ENCODE measurements at regions of chr6 and their contacts with region 1.

Region 1: GRCh38 chr6:43143235-43144124 is 27.6 kb upstream of the SRF start:
- DNase-seq: peak; percentile 91 to 98 (median 96)
- ATAC-seq: peak; percentile 99
- H3K4me3 ChIP-seq: no peak overlapping the region
- H3K27ac ChIP-seq: peak overlapping the region; percentile 47; the same call in 2 of the 3 replicates
- H3K4me1 ChIP-seq: peaks cover 5 to 21% of the 10 kb centered on the region in 2 experiments; a peak in 4 of 5 replicates
- H3K27me3 ChIP-seq: no peaks in the 10 kb centered on the region; a peak in 1 of 5 replicates
- CTCF ChIP-seq: peak; percentile 98 to 99 (median 99)
- EP300 ChIP-seq: no peak; the same call in 1 of the 2 replicates
- POLR2A ChIP-seq: no peak
- RAD21 ChIP-seq: peak; percentile 99 to 100

Region 2: GRCh38 chr6:42790549-42791181 is 352.8 kb before region 1 on chr6:
- CTCF ChIA-PET with region 1: no interaction called
- POLR2A ChIA-PET with region 1: no interaction called
- in situ Hi-C with region 1: no loop called
- intact Hi-C with region 1: no loop called
- DNase-seq: peak in 1 of 4 experiments; percentile 13
- ATAC-seq: peak; percentile 61
- H3K4me3 ChIP-seq: no peak overlapping the region
- H3K27ac ChIP-seq: no peak overlapping the region
- H3K4me1 ChIP-seq: peaks cover 11 to 31% of the 10 kb centered on the region in 2 experiments
- H3K27me3 ChIP-seq: no peaks in the 10 kb centered on the region
- CTCF ChIP-seq: no peak
- EP300 ChIP-seq: no peak
- POLR2A ChIP-seq: 0 out of 2 replicates have a peak, but pooled peaks have one; percentile 19
- RAD21 ChIP-seq: no peak

Region 3: GRCh38 chr6:42911171-42912021 is 232.1 kb before region 1 on chr6:
- CTCF ChIA-PET with region 1: no interaction called
- POLR2A ChIA-PET with region 1: no interaction called
- in situ Hi-C with region 1: loop called (anchors 5 kb)
- intact Hi-C with region 1: no loop called
- DNase-seq: no peak
- ATAC-seq: no peak
- H3K4me3 ChIP-seq: no peak overlapping the region
- H3K27ac ChIP-seq: no peak overlapping the region
- H3K4me1 ChIP-seq: peaks cover 5 to 13% of the 10 kb centered on the region in 2 experiments; a peak in 4 of 5 replicates
- H3K27me3 ChIP-seq: no peaks in the 10 kb centered on the region
- CTCF ChIP-seq: no peak
- EP300 ChIP-seq: no peak
- POLR2A ChIP-seq: no peak
- RAD21 ChIP-seq: no peak

Region 4: DNA sequence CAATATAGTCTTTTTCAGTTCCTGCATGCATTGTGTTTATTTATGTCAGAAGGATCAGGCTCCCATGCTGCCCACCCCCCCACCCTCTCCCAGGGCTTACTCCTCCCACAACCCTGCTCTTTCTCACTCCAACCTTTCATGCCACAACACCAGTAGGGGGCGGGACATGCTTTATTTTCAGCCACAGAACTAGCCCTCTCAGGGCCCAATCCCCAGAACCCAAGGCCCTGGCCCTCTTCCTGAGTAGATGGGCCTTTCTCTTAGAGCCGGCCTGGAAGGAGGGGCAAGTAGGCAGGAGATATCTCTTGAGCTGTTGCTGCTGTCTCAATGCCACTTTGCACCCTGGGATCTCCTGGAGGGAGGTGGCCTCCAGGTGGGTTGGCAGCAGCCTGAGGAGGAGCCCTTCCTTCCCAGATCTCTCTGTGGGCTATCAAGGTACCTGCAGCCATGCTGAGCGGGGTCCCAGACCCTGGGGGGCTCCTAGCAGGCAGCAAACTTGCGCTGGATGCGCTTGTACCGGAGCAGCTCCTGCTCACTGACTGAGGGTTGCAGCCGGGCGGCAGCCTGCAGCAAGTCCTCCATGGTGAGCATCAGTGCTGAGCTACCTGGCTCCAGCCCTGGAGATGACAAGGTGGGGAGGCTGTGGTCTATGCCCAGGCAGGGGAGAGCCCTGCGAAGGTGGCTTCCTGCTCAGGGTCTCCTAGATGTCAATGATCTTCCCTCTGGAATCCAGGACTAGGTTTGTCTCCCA is 179.4 kb before region 1 on chr6:
- CTCF ChIA-PET with region 1: interaction called, 14 read pairs
- POLR2A ChIA-PET with region 1: interaction called, 5 read pairs
- in situ Hi-C with region 1: no loop called
- intact Hi-C with region 1: loop called (anchors 2 kb)
- DNase-seq: peak; percentile 75 to 87 (median 81)
- ATAC-seq: peak; percentile 98
- H3K4me3 ChIP-seq: no peak overlapping the region
- H3K27ac ChIP-seq: no peak overlapping the region
- H3K4me1 ChIP-seq: peaks cover 0 to 14% of the 10 kb centered on the region in 2 experiments; a peak in 2 of 5 replicates
- H3K27me3 ChIP-seq: no peaks in the 10 kb centered on the region
- CTCF ChIP-seq: peak; percentile 64 to 85 (median 73)
- EP300 ChIP-seq: no peak
- POLR2A ChIP-seq: no peak
- RAD21 ChIP-seq: peak; percentile 51 to 80; a peak in 3 of 4 replicates

Region 5: GRCh38 chr6:43053545-43054205 is 89.8 kb before region 1 on chr6 and contains the start of gene CUL7:
- CTCF ChIA-PET with region 1: no interaction called
- POLR2A ChIA-PET with region 1: interaction called, 22 read pairs
- in situ Hi-C with region 1: no loop called
- intact Hi-C with region 1: no loop called
- DNase-seq: peak; percentile 96 to 98 (median 97)
- ATAC-seq: peak; percentile 98
- H3K4me3 ChIP-seq: peak within 1 kb of the TSS; percentile 73
- H3K27ac ChIP-seq: peak within 1 kb of the TSS; percentile 95
- H3K4me1 ChIP-seq: peaks cover 27 to 29% of the 10 kb centered on the region in 2 experiments
- H3K27me3 ChIP-seq: no peaks in the 10 kb centered on the region
- CTCF ChIP-seq: 0 out of 6 replicates have a peak, but pooled peaks of 1 of the 3 experiments have one; percentile 4
- EP300 ChIP-seq: peak; percentile 69
- POLR2A ChIP-seq: peak; percentile 97
- RAD21 ChIP-seq: peak in 1 of 2 experiments; percentile 40; a peak in 2 of 4 replicates
- polyA plus RNA-seq, gene CUL7: 0.44 to 0.74 TPM

Region 6: DNA sequence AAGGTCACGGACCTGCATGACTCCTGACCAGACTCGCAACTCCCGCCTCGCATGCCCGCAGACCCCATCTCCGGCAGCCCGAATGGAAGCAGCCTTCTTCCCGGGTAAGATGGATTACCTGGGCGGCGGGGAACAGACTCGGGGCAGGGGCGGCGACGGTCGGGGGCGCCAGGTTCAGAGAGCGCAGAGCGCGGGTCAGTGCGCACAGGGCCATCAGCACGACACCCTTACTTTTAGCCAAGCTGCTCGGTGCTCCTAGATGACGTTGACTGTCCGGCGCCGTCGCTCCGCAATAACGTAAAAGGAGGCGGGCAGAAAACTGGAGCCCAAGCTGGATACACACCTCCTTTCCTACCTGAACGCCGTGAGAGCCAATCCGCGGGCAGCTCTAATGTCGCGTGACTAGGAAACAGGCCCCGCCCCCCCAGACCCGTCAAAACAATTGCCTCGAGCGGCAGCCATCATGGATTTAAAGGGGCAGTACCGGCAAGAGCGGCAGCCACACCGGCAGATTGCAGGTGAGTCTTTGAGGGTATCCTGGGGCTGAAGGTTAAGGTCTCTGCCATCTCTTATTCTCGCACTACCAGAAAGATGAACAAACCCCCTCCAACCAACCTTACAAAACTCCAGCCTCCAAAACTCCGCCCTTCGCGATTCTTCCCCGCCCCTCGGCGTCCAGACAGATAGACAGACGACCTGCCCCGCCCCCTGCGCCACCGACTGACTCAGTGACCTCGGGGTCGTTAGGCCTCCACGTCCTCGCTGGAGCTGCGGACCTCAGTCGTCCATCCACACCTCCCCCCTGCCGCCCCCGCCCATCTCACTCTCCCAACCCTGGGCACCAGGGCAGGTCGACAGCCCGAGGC is 84.1 kb before region 1 on chr6 and contains the starts of genes KLC4 and MRPL2:
- CTCF ChIA-PET with region 1: no interaction called
- POLR2A ChIA-PET with region 1: interaction called, 22 read pairs
- in situ Hi-C with region 1: no loop called
- intact Hi-C with region 1: no loop called
- DNase-seq: peak; percentile 99 to 100 (median 100)
- ATAC-seq: peak; percentile 97
- H3K4me3 ChIP-seq: peak within 1 kb of the TSS; percentile 88
- H3K27ac ChIP-seq: peak within 1 kb of the TSS; percentile 96
- H3K4me1 ChIP-seq: peaks cover 15 to 18% of the 10 kb centered on the region in 2 experiments
- H3K27me3 ChIP-seq: no peaks in the 10 kb centered on the region
- CTCF ChIP-seq: no peak
- EP300 ChIP-seq: no peak
- POLR2A ChIP-seq: peak; percentile 97
- RAD21 ChIP-seq: no peak
- polyA plus RNA-seq, gene KLC4: 1.7 to 3.0 TPM
- polyA plus RNA-seq, gene MRPL2: 63.1 to 130 TPM

Region 7: DNA sequence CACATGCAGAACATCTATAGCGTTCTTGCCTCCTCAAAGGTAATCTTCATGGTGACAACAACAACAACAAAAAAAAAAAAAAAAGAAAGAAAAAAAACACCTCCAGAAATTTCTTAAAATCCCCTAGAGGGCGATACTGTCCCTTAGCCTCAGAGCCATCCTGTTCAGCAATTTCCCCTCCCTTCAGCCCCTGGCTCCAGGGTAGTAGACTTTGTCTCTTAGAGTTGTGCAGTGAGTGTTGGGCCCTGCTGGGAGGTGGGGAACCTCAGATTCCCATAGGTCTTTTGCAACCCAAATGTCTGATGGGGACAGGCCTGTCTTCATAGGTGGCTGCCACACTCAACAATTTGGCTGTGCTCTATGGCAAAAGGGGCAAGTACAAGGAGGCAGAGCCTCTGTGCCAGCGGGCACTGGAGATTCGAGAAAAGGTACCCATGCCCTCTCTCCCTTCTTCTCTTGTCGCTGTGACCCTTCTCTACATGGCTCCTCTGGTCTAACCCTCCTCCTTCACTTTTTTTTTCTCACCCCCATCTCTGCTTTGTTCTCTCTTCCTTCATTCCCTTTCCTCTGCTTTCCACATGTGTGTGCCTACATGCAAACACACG is 73.3 kb before region 1 on chr6:
- CTCF ChIA-PET with region 1: interaction called, 22 read pairs
- POLR2A ChIA-PET with region 1: no interaction called
- in situ Hi-C with region 1: no loop called
- intact Hi-C with region 1: loop called (anchors 2 kb)
- DNase-seq: peak; percentile 51 to 85 (median 68)
- ATAC-seq: peak; percentile 91
- H3K4me3 ChIP-seq: no peak overlapping the region
- H3K27ac ChIP-seq: no peak overlapping the region
- H3K4me1 ChIP-seq: no peaks in the 10 kb centered on the region
- H3K27me3 ChIP-seq: no peaks in the 10 kb centered on the region
- CTCF ChIP-seq: peak; percentile 69 to 94 (median 82)
- EP300 ChIP-seq: no peak
- POLR2A ChIP-seq: no peak
- RAD21 ChIP-seq: peak; percentile 68 to 77

Measured in K562 (cell line).